ENCODE measurements at regions of chr6 and their contacts with region 1.

Region 1: DNA sequence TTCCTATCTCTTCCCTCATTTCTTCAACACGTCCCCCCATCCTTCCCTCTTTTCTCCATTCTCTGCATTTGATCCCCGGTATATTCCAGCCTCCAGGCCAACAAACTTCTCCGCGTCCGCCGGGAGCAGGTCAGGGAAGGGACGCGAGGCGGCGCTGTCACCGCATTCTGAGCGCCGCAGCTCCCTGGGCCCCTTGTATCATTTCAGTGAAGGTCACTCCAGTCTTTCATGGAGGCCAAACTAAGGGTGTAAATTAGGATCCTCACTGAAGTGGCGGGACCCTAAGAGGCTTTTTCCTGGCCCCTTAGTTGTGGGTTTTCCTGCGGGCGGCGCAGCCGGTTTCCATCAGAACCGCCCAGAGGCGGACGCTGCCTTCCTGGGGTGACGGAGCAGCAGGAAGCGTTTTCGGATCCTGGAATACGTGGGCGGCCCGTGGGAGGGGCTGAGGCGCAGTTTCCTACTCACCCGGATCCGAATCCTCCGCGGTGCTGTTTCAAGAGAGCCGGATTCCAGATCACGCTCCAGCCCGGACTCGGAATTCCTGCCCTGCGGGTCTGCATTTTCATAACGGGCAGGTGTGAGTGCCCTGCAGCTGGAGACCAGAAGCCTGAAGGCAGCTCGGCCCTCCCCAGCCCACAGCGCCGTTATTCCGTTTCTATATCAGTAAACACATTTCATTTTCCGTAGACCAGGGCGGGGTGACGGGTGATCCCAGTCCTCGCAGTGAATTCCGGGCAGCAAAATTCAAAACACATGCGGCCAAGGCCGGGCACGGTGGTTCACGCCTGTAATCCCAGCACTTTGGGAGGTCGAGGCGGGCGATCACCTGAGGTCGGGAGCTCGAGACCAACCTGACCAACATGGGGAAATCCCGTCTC is 3.6 kb upstream of the MICA start:
- DNase-seq: peak; percentile 45
- H3K4me3 ChIP-seq: peak overlapping the region; percentile 80
- H3K27me3 ChIP-seq: no peaks in the 10 kb centered on the region
- CTCF ChIP-seq: peak; percentile 98

Region 2: GRCh38 chr6:31483392-31483791 is 83.6 kb after region 1 on chr6:
- CTCF ChIA-PET with region 1: interaction called, 3 read pairs
- POLR2A ChIA-PET with region 1: interaction called, 12 read pairs
- DNase-seq: no peak
- H3K4me3 ChIP-seq: no peak overlapping the region
- H3K27me3 ChIP-seq: peaks cover 5% of the 10 kb centered on the region
- CTCF ChIP-seq: no peak